ENCODE measurements at regions of chr2 and their contacts with region 1.

Region 1: DNA sequence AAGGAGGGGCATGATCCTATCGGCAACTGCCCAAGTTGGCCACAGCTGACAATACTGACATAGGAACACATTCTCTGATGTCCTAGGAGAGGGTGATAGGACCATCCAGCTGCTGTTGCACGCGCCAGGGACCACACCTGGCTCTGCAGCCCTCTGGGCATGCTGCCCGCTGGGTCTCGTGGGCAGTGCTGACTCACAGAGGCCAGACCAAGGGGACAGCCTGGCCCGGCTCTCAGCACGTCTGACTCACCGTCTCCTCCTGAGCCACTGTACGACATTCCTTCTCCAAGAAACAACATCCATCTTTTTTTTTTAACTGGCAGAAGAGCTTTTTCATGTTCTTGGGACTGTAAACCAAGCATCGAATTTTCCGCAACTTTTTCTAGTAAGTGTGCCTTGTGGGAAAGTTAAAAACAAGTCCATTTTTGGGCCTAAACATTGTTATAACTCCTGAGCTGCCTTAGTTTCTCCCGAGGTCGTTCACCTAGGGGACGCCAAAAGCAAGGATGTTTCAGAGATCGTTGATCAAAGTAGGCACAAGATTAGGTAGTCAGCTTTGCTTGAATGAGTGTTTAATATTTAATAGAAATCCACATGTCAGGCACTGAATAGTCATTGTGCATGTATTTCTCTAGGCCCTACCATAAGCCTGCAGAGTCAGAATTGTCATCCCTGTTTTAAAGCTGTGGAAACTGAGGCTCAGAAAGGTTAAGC is 100.3 kb downstream of the TTC32 start:
- DNase-seq: peak; percentile 91 to 97
- H3K4me3 ChIP-seq: no peak overlapping the region
- H3K27ac ChIP-seq: peak overlapping the region; percentile 89 to 93
- H3K4me1 ChIP-seq: peaks cover 20 to 47% of the 10 kb centered on the region in 2 donors
- H3K27me3 ChIP-seq: no peaks in the 10 kb centered on the region
- CTCF ChIP-seq: no peak

Region 2: GRCh38 chr2:19786408-19787058 is 15.0 kb before region 1 on chr2:
- intact Hi-C with region 1: loop called (anchors 2 kb)
- DNase-seq: peak in 1 of 2 donors; percentile 40
- H3K4me3 ChIP-seq: no peak overlapping the region
- H3K27ac ChIP-seq: peak overlapping the region; percentile 63 to 84
- H3K4me1 ChIP-seq: peaks cover 6 to 19% of the 10 kb centered on the region in 2 donors
- H3K27me3 ChIP-seq: no peaks in the 10 kb centered on the region
- CTCF ChIP-seq: no peak

Region 3: GRCh38 chr2:19819097-19820065 is 17.9 kb after region 1 on chr2:
- intact Hi-C with region 1: loop called (anchors 2 kb)
- DNase-seq: no peak
- H3K4me3 ChIP-seq: no peak overlapping the region
- H3K27ac ChIP-seq: peak overlapping the region; percentile 6 to 65
- H3K4me1 ChIP-seq: peaks cover 12 to 22% of the 10 kb centered on the region in 2 donors
- H3K27me3 ChIP-seq: no peaks in the 10 kb centered on the region
- CTCF ChIP-seq: no peak

Region 4: GRCh38 chr2:19857806-19858205 is 56.3 kb after region 1 on chr2:
- intact Hi-C with region 1: loop called (anchors 1 kb)
- DNase-seq: peak in 1 of 2 donors; percentile 78
- H3K4me3 ChIP-seq: peak overlapping the region in 1 of 2 donors; percentile 45
- H3K27ac ChIP-seq: peak overlapping the region; percentile 89 to 92
- H3K4me1 ChIP-seq: peaks cover 23 to 64% of the 10 kb centered on the region in 2 donors
- H3K27me3 ChIP-seq: no peaks in the 10 kb centered on the region
- CTCF ChIP-seq: no peak

Measured in ascending aorta (tissue), 2 donors.